ENCODE measurements at regions of chr3 and their contacts with region 1.

Region 1: DNA sequence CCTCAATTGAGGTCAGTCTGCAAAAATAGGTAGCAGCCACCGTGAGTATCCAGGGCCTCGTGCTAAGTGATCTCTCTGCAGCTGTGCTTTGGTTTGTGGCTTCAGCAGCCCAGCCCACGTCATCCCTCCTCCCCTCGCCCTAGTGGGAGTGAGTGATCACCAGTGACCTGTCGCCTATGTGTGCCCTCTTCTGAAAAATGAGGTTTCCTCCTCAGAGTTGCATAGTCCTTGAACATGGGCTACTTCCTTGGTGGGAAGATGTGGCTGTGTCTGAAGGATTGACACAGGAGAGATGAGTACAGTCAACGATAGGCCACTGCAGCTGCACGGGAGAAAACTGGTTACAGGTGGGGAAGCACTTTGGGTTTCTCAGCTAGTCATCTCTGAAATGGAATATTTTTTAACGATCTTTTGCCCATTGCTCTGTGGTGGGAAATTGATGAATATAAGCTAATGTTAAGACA is 144.8 kb upstream of the BHLHE40 start:
- DNase-seq: peak; percentile 80
- H3K4me3 Mint-ChIP-seq: peak overlapping the region; percentile 79
- H3K27ac Mint-ChIP-seq: peak overlapping the region; percentile 98
- H3K4me1 Mint-ChIP-seq: peaks cover 86% of the 10 kb centered on the region
- H3K27me3 Mint-ChIP-seq: no peaks in the 10 kb centered on the region

Region 2: GRCh38 chr3:4387210-4388204 is 446.9 kb before region 1 on chr3:
- intact Hi-C with region 1: loop called (anchors 5 kb)
- DNase-seq: no peak
- H3K4me3 Mint-ChIP-seq: peak overlapping the region; percentile 8
- H3K27ac Mint-ChIP-seq: peak overlapping the region; percentile 88
- H3K4me1 Mint-ChIP-seq: peaks cover 52% of the 10 kb centered on the region
- H3K27me3 Mint-ChIP-seq: peaks cover 1% of the 10 kb centered on the region

Region 3: DNA sequence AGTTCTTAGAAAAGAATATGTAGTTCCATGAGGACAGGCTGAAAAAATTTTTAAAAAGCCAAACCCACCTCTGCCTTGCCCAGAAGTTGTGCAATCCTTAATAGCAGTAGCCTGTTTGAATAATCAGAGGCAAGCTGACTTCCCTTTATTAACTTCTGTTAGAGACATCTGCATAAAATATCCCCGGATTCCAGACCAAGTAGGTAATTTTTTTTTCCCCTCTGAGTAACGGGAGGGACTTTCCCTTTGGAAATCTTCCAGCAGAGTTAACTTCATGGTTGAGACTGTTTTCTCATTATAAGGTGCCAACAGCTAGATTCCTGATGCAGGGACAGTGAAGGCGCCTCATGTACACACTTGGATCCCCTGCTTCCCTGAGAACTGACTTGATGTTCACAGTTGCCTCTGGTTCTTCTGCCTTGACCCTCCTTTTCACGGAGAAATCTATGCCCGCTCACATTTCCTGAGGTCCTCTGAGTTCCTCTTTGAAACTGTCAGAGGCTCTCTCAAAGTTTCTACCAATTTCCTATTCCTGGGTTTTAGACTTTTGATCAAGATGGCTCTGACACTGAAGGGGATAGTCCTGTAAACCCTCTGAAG is 82.8 kb before region 1 on chr3:
- intact Hi-C with region 1: loop called (anchors 2 kb)
- DNase-seq: no peak
- H3K4me3 Mint-ChIP-seq: no peak overlapping the region
- H3K27ac Mint-ChIP-seq: peak overlapping the region; percentile 94
- H3K4me1 Mint-ChIP-seq: peaks cover 90% of the 10 kb centered on the region
- H3K27me3 Mint-ChIP-seq: no peaks in the 10 kb centered on the region

Region 4: DNA sequence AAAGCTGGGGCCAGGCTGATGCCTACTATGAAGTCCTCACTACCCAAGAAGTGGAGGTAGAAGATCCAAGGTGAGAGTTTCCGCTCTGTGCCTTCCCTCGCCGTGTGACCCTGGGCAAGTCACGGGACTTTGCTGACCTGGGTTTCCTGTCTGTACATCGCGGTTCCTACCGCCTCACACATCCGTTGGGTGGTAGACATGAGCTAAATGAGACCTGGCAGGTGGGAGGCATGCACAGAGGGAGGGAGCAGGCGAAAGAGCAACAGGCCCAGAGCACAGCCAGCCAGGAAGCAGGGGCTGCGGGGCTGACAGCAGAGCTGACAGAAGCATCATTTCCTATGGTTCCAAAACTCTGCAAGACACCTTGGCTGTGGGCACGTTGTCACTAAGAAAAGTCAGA is 12.5 kb before region 1 on chr3:
- intact Hi-C with region 1: loop called (anchors 1 kb)
- DNase-seq: peak; percentile 82
- H3K4me3 Mint-ChIP-seq: peak overlapping the region; percentile 86
- H3K27ac Mint-ChIP-seq: peak overlapping the region; percentile 100
- H3K4me1 Mint-ChIP-seq: peaks cover 98% of the 10 kb centered on the region
- H3K27me3 Mint-ChIP-seq: no peaks in the 10 kb centered on the region

Region 5: DNA sequence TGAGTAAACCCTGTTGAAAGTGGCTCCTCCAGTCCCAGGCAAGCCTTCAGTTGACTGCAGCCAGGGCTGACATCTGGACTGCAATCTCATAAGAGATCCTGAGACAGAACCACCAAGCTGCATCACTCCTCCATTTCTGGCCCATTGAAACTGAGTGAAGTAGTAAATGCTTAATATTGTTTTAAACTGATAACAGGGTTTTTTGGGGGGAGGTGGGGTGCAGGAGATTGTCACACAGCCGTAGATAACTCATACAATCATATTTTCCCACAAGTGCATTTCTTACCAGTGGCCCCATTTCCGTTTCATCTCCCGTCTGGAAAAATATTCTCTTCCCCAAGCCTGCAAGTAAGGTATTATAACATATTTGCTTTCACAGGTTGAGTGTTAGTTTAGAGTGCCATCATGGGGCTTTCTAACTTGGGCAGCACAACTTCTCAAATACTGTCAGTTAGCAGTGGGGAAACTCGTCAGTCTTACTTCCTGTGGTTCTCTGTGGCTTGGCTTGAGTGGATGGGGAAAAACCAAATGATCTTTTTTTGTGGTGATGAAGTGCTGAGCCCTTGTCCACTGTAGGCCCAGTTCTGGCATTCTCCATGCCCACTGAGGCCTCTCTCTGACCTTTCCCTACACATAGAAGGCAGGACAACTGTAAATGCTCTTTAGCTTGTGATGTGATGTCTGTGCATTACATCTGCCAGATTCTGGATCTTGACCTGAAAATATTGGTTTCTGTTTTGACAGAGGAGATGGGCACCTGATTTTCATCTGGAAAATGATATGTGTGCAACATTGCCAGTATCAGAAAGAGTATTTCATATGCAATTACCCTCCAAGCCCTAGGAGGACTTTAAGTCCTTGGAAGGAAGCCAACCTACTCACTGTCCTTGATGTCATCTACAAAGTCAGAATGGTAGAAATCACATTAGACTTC is 54.7 kb after region 1 on chr3:
- intact Hi-C with region 1: loop called (anchors 1 kb)
- DNase-seq: peak; percentile 50
- H3K4me3 Mint-ChIP-seq: peak overlapping the region; percentile 58
- H3K27ac Mint-ChIP-seq: peak overlapping the region; percentile 88
- H3K4me1 Mint-ChIP-seq: peaks cover 59% of the 10 kb centered on the region
- H3K27me3 Mint-ChIP-seq: no peaks in the 10 kb centered on the region

Region 6: DNA sequence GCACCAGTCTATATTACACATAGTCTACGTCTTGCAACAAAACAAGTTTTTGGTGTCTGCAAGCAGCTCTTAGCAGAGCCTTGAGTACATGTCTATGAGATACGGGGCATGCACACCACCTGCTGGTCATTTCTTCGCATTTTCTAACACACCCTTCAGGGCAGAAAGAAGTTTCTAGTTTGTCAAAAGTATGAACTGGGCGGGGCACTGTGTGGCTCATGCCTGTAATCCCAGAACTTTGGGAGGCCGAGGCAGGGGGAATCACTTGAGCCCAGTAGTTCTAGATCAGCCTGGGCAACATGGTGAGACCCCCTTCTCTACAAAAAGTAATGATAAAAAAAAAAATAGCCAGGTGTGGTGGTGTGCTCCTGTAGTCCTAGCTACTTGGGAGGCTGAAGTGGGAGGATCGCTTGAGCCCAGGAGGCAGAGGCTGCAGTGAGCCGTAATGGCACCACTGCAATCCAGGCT is 223.5 kb after region 1 on chr3:
- intact Hi-C with region 1: loop called (anchors 2 kb)
- DNase-seq: peak; percentile 69
- H3K4me3 Mint-ChIP-seq: peak overlapping the region; percentile 23
- H3K27ac Mint-ChIP-seq: peak overlapping the region; percentile 53
- H3K4me1 Mint-ChIP-seq: peaks cover 52% of the 10 kb centered on the region
- H3K27me3 Mint-ChIP-seq: no peaks in the 10 kb centered on the region

Measured in activated T-helper 1 cell treated with anti-CD3 and anti-CD28 coated beads, Interleukin-12 subunit alpha, Interleukin-12 subunit beta, Interleukin-2, Interleukin-4 antibody, amounts not matched to agents 30 ng/mL and 10 ng/mL and 1 ng/mL, durations not matched to agents 14 hours and 24 hours and 36 hours (primary cell).